Breast epithelium (tissue), 4 donors: ENCODE measurements at regions of chr10 and their contacts with region 1.

Region 1: GRCh38 chr10:107610775-107611508 is 446.4 kb upstream of the SORCS1 start:
- DNase-seq: no peak
- H3K4me3 ChIP-seq: no peak overlapping the region
- H3K27ac ChIP-seq: no peak overlapping the region
- H3K4me1 ChIP-seq: no peaks in the 10 kb centered on the region
- H3K27me3 ChIP-seq: no peaks in the 10 kb centered on the region
- CTCF ChIP-seq: no peak
- POLR2A ChIP-seq: no peak

Region 2: GRCh38 chr10:107356396-107356795 is 254.5 kb before region 1 on chr10:
- intact Hi-C with region 1: no loop called
- DNase-seq: no peak
- H3K4me3 ChIP-seq: no peak overlapping the region
- H3K27ac ChIP-seq: no peak overlapping the region
- H3K4me1 ChIP-seq: no peaks in the 10 kb centered on the region
- H3K27me3 ChIP-seq: no peaks in the 10 kb centered on the region
- CTCF ChIP-seq: no peak
- POLR2A ChIP-seq: no peak

Region 3: GRCh38 chr10:107653832-107654287 is 42.9 kb after region 1 on chr10:
- intact Hi-C with region 1: loop called (anchors 2 kb)
- DNase-seq: no peak
- H3K4me3 ChIP-seq: peak overlapping the region; percentile 32 to 50 (median 35)
- H3K27ac ChIP-seq: peak overlapping the region in 1 of 2 donors; percentile 14
- H3K4me1 ChIP-seq: no peaks in the 10 kb centered on the region
- H3K27me3 ChIP-seq: no peaks in the 10 kb centered on the region
- CTCF ChIP-seq: no peak
- POLR2A ChIP-seq: no peak